ENCODE measurements at regions of chr10 and their contacts with region 1.

Region 1: GRCh38 chr10:64288404-64288803 is 767.2 kb downstream of the REEP3 start:
- DNase-seq: no peak
- H3K4me3 ChIP-seq: no peak overlapping the region
- H3K4me3 Mint-ChIP-seq: no peak overlapping the region
- H3K27ac Mint-ChIP-seq: no peak overlapping the region
- H3K4me1 ChIP-seq: no peaks in the 10 kb centered on the region
- H3K4me1 Mint-ChIP-seq: no peaks in the 10 kb centered on the region
- H3K27me3 ChIP-seq: 0 out of 2 replicates have a peak, but pooled peaks cover 3% of the 10 kb centered on the region
- H3K27me3 Mint-ChIP-seq: peaks cover 3% of the 10 kb centered on the region
- CTCF ChIP-seq: no peak

Region 2: GRCh38 chr10:64091897-64092296 is 196.5 kb before region 1 on chr10:
- CTCF ChIA-PET with region 1: no interaction called
- POLR2A ChIA-PET with region 1: no interaction called
- intact Hi-C with region 1: loop called (anchors 1 kb)
- DNase-seq: peak; percentile 48 to 53
- H3K4me3 ChIP-seq: no peak overlapping the region
- H3K4me3 Mint-ChIP-seq: no peak overlapping the region
- H3K27ac Mint-ChIP-seq: no peak overlapping the region
- H3K4me1 ChIP-seq: no peaks in the 10 kb centered on the region
- H3K4me1 Mint-ChIP-seq: no peaks in the 10 kb centered on the region
- H3K27me3 ChIP-seq: no peaks in the 10 kb centered on the region
- H3K27me3 Mint-ChIP-seq: no peaks in the 10 kb centered on the region
- CTCF ChIP-seq: peak; percentile 61 to 66

Region 3: DNA sequence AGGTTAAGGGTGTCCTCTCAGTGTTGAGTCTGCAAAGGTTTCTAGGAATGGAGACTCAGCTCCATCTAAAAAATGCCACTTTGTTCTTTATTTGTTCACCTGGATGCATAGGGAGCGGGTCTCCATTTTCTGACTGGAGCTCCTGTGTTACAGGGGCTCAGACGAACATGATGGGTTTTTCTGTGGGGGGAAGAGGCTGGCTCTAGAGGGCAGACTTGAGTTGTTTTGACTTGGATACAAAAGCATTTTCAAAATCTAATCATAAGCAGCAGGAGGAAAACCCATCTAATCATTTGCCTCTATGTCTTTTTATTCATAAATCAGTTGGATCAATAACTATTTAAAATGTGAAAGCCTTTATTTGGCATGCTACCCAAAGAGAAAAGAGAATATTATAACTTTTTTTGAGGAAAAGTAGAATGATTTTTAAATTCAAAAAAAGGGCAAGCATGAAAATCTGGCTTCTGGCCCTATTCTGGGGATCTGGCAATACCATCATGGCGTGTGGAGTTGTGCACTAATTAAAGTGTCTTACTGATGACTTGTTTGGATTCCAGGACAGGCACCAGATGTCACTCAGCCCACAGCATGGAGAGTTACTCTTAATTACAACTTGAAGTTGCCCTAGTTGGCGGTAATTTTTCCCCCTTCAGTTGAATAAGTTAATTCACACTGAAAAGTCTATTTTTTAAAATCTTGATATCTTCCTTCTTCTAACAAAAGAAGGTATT is 172.3 kb before region 1 on chr10:
- CTCF ChIA-PET with region 1: no interaction called
- POLR2A ChIA-PET with region 1: no interaction called
- intact Hi-C with region 1: loop called (anchors 1 kb)
- DNase-seq: peak in 1 of 2 experiments; percentile 49
- H3K4me3 ChIP-seq: no peak overlapping the region
- H3K4me3 Mint-ChIP-seq: no peak overlapping the region
- H3K27ac Mint-ChIP-seq: no peak overlapping the region
- H3K4me1 ChIP-seq: peaks cover 19% of the 10 kb centered on the region
- H3K4me1 Mint-ChIP-seq: peaks cover 14% of the 10 kb centered on the region
- H3K27me3 ChIP-seq: no peaks in the 10 kb centered on the region
- H3K27me3 Mint-ChIP-seq: peaks cover 5% of the 10 kb centered on the region
- CTCF ChIP-seq: peak; percentile 36 to 76

Region 4: DNA sequence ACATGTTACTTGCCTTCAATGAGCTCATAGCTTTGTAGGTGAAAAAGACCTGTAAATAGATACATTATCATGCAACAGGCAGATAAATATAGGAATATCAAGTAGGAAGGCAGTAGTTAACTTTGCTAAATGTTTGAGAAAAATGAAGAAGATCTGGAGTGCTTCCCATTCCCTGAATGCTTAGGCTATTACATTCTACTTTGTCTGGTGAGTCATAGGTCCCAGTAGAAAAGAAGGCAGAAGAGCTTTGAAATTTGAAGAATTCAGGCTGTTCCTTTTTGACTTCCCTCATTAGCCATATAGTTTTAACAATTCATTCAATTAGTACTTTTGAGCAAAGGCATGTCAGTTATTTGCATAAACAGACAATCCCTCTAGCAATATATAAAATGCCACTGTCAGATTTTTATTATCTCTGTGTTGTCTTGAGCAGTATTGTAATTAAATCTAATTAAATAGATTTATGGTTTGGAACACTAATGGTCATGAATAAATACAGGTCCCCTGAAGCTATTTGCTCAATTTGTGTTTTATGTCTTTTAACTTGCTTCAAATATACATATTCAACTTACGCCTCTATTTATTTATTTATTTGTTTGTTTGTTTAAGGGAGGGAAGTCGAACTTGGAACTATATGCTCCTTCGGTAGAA is 107.8 kb after region 1 on chr10:
- CTCF ChIA-PET with region 1: no interaction called
- POLR2A ChIA-PET with region 1: no interaction called
- intact Hi-C with region 1: no loop called
- DNase-seq: no peak
- H3K4me3 ChIP-seq: no peak overlapping the region
- H3K4me3 Mint-ChIP-seq: no peak overlapping the region
- H3K27ac Mint-ChIP-seq: no peak overlapping the region
- H3K4me1 ChIP-seq: peaks cover 20% of the 10 kb centered on the region
- H3K4me1 Mint-ChIP-seq: peaks cover 14% of the 10 kb centered on the region
- H3K27me3 ChIP-seq: no peaks in the 10 kb centered on the region
- H3K27me3 Mint-ChIP-seq: no peaks in the 10 kb centered on the region
- CTCF ChIP-seq: no peak